CD4-positive, alpha-beta memory T cell (primary cell): ENCODE measurements at regions of chr11 and their contacts with region 1.

Region 1: DNA sequence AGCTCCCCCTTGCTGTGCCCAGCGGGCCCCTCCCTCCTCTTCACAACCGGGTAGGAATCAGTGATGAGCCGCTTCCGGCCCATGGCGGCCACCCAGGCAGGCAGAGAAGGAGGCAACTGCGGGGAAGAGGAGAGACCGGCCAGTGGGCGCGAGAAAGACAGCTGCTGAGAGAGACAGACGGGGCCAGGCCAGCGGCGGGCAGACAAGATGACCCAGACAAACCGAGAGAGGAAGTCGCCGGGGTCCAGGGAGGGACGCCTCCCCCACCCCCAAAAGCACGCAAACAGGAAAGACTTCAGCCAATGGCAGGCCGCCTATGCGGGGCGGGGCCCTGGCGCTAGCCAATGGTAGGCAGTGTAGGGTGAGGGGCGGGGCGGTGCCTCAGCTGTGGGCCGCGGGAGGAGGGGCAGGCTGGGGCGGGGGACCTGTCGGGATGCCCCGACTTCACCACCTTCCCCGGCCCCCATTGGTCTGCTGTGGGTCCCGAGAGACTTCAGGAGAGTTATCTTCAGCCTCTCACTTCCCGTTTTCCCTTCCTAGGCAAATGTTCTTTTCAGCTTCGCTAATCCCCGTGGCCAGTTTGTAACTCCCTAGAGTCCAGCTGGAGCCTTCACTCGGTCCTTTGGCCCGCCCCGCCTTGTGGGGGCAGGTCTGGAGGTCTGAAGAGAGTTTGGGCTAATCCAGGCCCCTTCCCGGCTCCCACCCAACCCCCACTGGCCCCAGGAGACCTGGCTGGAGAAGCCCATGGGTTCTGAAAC is at the start of gene POLD4:
- DNase-seq: peak; percentile 94 to 96 (median 95)
- H3K4me3 ChIP-seq: peak within 1 kb of the TSS; percentile 86 to 99
- H3K4me3 Mint-ChIP-seq: peak within 1 kb of the TSS; percentile 97 to 100 (median 99)
- H3K27ac ChIP-seq: peak within 1 kb of the TSS; percentile 96
- H3K27ac Mint-ChIP-seq: peak within 1 kb of the TSS; percentile 99 to 100 (median 100)
- H3K4me1 ChIP-seq: peaks cover 51% of the 10 kb centered on the region
- H3K4me1 Mint-ChIP-seq: peaks cover 31 to 68% (median 44%) of the 10 kb centered on the region in 4 donors
- H3K27me3 ChIP-seq: no peaks in the 10 kb centered on the region
- H3K27me3 Mint-ChIP-seq: no peaks in the 10 kb centered on the region
- total RNA-seq, gene POLD4: 87.9 to 91.3 TPM

Region 2: DNA sequence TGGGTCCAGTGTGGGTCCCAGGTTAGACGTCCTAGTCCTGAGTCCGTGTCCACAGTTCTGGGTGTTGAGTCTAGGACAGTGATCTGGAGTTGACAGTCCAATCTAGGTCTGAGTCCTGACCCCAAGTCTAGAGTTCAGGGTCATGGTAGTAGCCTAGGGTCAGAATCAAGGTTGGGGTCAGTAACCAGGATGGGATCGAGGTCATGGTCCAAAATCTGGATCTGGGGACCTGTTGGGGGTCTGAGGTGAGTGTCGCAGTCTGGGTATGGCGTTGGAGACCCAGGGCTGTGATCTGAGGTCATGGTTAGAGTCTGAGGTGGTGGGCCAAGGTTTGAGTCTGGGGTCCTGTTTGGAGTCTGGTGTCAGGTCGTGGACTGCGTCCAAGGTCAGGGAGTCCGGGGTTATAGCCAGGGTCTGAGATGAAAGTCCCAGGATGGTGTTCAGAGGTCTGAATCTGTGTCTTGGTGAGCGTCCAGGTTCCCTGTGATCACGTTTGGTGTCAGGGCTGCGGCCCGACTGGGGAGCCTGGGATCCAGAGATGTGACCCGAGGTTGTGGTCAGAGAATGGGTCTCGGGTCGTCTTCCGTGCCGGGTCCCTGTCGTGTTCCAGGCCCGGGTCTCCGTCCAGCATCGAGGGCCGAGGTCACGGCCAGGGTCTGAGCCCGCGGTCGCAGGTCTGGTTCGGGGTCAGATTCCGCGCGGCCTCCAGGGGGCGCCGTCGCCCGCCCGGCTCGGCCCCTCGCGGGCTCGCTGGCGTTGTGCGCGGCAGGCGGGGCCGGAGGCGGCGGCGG is 87.7 kb before region 1 on chr11:
- CTCF ChIA-PET with region 1: interaction called, 13 read pairs
- POLR2A ChIA-PET with region 1: interaction called, 22 read pairs
- intact Hi-C with region 1: loop called (anchors 1 kb)
- DNase-seq: peak; percentile 61 to 85 (median 77)
- H3K4me3 ChIP-seq: peak overlapping the region in 1 of 2 donors; percentile 23
- H3K4me3 Mint-ChIP-seq: peak overlapping the region; percentile 77 to 86 (median 80)
- H3K27ac ChIP-seq: peak overlapping the region; percentile 63
- H3K27ac Mint-ChIP-seq: peak overlapping the region; percentile 79 to 94 (median 87)
- H3K4me1 ChIP-seq: peaks cover 61% of the 10 kb centered on the region
- H3K4me1 Mint-ChIP-seq: peaks cover 34 to 82% (median 50%) of the 10 kb centered on the region in 4 donors
- H3K27me3 ChIP-seq: no peaks in the 10 kb centered on the region
- H3K27me3 Mint-ChIP-seq: peaks cover 0 to 5% of the 10 kb centered on the region in 2 donors

Region 3: DNA sequence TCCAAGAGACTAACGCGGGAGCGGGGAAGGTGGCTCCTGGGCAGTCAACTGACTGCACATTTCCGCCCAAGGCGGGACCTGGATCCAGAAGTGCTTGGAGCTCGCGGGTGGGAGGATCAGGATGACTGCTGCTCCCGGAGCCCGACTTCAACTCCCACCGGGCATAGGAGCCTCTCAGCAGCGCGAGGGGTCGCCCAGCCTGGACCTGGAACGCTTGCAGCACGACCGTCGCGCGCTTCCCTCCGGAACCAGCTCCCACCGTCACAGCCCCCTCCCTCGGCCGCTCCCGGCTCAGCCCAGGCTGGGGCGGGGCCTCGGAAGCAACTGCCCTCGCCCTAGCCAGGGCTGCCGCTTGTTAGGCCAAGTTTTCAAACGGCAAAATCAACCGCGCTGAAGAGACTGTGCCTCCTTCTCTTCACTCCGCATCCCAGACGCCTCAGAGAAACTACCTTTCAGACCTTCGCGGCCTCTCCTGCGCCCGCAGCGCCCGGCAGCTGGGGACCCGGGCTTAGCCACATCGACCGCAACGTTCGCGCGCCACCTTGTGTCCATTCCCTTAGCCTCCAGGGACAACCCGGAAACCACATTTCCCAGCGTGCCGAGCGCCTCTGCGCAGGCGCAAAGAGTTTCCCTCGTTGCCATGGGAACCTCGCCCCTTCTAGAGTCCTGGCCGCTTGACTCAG is 36.1 kb before region 1 on chr11:
- CTCF ChIA-PET with region 1: interaction called, 31 read pairs
- POLR2A ChIA-PET with region 1: interaction called, 32 read pairs
- intact Hi-C with region 1: no loop called
- DNase-seq: peak; percentile 96 to 99 (median 97)
- H3K4me3 ChIP-seq: peak overlapping the region; percentile 91
- H3K4me3 Mint-ChIP-seq: peak overlapping the region; percentile 94 to 99 (median 98)
- H3K27ac ChIP-seq: peak overlapping the region; percentile 69
- H3K27ac Mint-ChIP-seq: peak overlapping the region; percentile 95 to 99 (median 98)
- H3K4me1 ChIP-seq: peaks cover 35% of the 10 kb centered on the region
- H3K4me1 Mint-ChIP-seq: peaks cover 27 to 49% (median 40%) of the 10 kb centered on the region in 4 donors
- H3K27me3 ChIP-seq: no peaks in the 10 kb centered on the region
- H3K27me3 Mint-ChIP-seq: no peaks in the 10 kb centered on the region

Region 4: DNA sequence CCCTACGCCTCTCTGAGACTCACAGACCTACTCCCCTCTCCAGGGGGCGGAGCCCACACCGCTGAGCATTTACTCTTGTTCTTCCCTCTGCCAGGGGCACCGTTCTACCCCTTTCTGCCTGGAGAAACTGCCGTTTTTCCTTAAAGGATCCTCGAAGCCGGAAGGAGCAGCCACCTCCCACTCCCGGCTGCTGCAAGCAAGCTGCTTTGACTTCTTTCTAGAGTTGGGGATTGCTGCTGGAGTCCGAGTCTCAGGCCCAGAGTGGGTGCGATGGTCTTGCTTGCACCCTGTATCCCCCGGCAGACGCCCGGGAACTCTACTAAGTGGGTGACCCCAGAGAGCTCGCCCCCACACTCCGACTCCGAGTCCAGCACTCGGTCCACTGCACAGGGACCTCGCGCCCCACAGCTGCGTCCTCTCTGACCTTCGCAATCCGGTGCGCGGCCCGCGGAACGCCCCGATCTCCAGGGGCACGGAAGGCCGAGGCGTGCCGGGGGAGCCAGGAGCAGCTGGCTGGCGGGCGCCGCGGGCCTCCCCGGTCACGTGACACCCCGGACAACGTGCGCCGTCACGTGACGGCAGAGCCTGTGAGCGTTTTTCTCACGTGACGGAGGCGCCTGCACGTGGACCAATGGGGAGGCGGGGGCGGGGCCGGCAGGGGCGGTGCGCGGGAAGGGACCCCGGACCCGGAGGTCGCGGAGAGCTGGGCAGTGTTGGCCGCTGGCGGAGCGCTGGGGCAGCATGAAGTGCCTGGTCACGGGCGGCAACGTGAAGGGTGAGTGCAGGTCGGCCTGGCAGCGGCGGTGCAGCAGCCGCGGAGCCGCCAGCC is 38.0 kb after region 1 on chr11 and contains the start of gene RAD9A:
- CTCF ChIA-PET with region 1: interaction called, 1,065 read pairs
- POLR2A ChIA-PET with region 1: interaction called, 449 read pairs
- intact Hi-C with region 1: no loop called
- DNase-seq: peak; percentile 86 to 93 (median 89)
- H3K4me3 ChIP-seq: peak within 1 kb of the TSS; percentile 63 to 75
- H3K4me3 Mint-ChIP-seq: peak within 1 kb of the TSS; percentile 87 to 93 (median 91)
- H3K27ac ChIP-seq: peak within 1 kb of the TSS; percentile 79
- H3K27ac Mint-ChIP-seq: peak within 1 kb of the TSS; percentile 82 to 94 (median 87)
- H3K4me1 ChIP-seq: peaks cover 17% of the 10 kb centered on the region
- H3K4me1 Mint-ChIP-seq: peaks cover 23 to 46% (median 36%) of the 10 kb centered on the region in 4 donors
- H3K27me3 ChIP-seq: no peaks in the 10 kb centered on the region
- H3K27me3 Mint-ChIP-seq: no peaks in the 10 kb centered on the region
- total RNA-seq, gene RAD9A: 51.8 to 55.9 TPM

Region 5: GRCh38 chr11:67468835-67469811 is 115.6 kb after region 1 on chr11 and contains the start of gene TMEM134:
- CTCF ChIA-PET with region 1: interaction called, 4 read pairs
- POLR2A ChIA-PET with region 1: interaction called, 14 read pairs
- intact Hi-C with region 1: no loop called
- DNase-seq: peak; percentile 85 to 88 (median 88)
- H3K4me3 ChIP-seq: peak within 1 kb of the TSS; percentile 78 to 79
- H3K4me3 Mint-ChIP-seq: peak within 1 kb of the TSS; percentile 83 to 92 (median 90)
- H3K27ac ChIP-seq: peak within 1 kb of the TSS; percentile 81
- H3K27ac Mint-ChIP-seq: peak within 1 kb of the TSS; percentile 84 to 96 (median 91)
- H3K4me1 ChIP-seq: peaks cover 46% of the 10 kb centered on the region
- H3K4me1 Mint-ChIP-seq: peaks cover 16 to 36% (median 27%) of the 10 kb centered on the region in 4 donors
- H3K27me3 ChIP-seq: no peaks in the 10 kb centered on the region
- H3K27me3 Mint-ChIP-seq: no peaks in the 10 kb centered on the region
- total RNA-seq, gene TMEM134: 90.1 to 99.1 TPM

Region 6: DNA sequence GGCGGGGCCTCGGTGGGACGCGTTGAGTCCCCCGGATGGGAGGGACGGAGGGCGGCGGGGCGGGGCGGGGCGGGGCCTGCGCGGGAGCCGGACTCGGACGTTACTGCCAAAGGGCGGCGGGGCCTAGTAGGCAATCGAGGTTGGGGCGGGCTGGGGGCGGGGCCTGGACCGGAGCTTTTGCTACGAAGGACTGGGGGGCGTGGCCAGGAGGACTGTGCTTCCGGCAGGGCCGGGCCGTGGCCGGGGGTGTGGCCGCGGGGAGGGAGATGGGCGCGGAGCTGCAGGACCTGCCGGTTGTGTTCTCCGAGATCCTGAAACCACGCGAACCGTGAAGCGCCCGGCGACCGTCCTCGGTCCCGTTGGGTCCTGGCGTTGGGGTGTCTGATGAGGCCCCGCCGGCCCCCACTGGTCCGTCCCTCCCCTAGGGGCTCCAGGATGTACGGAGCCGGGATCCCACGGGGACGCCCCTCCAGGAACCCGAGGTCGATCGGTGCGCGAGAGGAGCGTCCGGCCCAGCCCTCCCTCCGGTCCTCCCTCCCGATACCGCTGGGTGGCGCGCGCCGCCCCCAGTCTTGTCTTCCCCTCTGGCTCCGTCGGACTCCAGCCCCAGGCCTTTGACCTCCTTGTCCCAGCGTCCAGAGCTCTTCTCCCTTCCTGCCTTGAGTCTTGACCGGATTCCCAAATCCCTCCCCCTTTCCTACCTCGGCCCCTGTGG is 276.9 kb after region 1 on chr11:
- CTCF ChIA-PET with region 1: no interaction called
- POLR2A ChIA-PET with region 1: interaction called, 11 read pairs
- intact Hi-C with region 1: loop called (anchors 1 kb)
- DNase-seq: peak; percentile 89 to 92 (median 90)
- H3K4me3 ChIP-seq: peak overlapping the region; percentile 3 to 84
- H3K4me3 Mint-ChIP-seq: peak overlapping the region; percentile 84 to 91 (median 89)
- H3K27ac ChIP-seq: peak overlapping the region; percentile 81
- H3K27ac Mint-ChIP-seq: peak overlapping the region; percentile 76 to 96 (median 93)
- H3K4me1 ChIP-seq: peaks cover 14% of the 10 kb centered on the region
- H3K4me1 Mint-ChIP-seq: peaks cover 3 to 11% (median 7%) of the 10 kb centered on the region in 4 donors
- H3K27me3 ChIP-seq: no peaks in the 10 kb centered on the region
- H3K27me3 Mint-ChIP-seq: no peaks in the 10 kb centered on the region